CD4-positive, alpha-beta memory T cell (primary cell): ENCODE measurements at regions of chr9 and their contacts with region 1.

Region 1: DNA sequence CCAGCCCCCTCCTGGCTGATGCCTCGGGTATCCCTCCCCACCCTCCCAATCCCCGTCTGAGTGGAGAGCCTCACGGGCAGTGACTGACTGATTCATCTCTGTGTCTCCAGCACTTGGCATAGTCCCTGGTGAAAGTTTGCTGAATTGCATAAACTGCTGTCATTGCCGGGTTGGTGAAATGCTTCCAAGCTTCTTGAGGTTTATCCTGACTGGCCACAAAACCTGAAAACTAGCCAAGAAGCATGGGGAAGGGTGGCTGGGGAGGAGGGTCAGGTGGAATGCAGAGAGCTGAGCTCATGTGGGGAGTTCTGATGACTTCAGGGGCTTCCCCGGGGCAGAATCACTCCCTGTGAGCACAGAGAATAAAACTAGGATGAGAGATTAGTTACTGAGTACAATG is 56.9 kb upstream of the GGTA1 start:
- DNase-seq: no peak
- H3K4me3 ChIP-seq: no peak overlapping the region
- H3K4me3 Mint-ChIP-seq: no peak overlapping the region
- H3K27ac ChIP-seq: no peak overlapping the region
- H3K27ac Mint-ChIP-seq: no peak overlapping the region
- H3K4me1 ChIP-seq: no peaks in the 10 kb centered on the region
- H3K4me1 Mint-ChIP-seq: no peaks in the 10 kb centered on the region
- H3K27me3 ChIP-seq: peaks cover 5% of the 10 kb centered on the region
- H3K27me3 Mint-ChIP-seq: peaks cover 4 to 9% of the 10 kb centered on the region in 2 donors

Region 2: GRCh38 chr9:121545875-121546423 is 10.6 kb before region 1 on chr9:
- CTCF ChIA-PET with region 1: interaction called, 13 read pairs
- POLR2A ChIA-PET with region 1: no interaction called
- intact Hi-C with region 1: no loop called
- DNase-seq: peak; percentile 25 to 54 (median 41)
- H3K4me3 ChIP-seq: no peak overlapping the region
- H3K4me3 Mint-ChIP-seq: no peak overlapping the region
- H3K27ac ChIP-seq: no peak overlapping the region
- H3K27ac Mint-ChIP-seq: no peak overlapping the region
- H3K4me1 ChIP-seq: peaks cover 10% of the 10 kb centered on the region
- H3K4me1 Mint-ChIP-seq: peaks cover 0 to 5% (median 3%) of the 10 kb centered on the region in 4 donors
- H3K27me3 ChIP-seq: no peaks in the 10 kb centered on the region
- H3K27me3 Mint-ChIP-seq: peaks cover 6 to 9% of the 10 kb centered on the region in 2 donors

Region 3: DNA sequence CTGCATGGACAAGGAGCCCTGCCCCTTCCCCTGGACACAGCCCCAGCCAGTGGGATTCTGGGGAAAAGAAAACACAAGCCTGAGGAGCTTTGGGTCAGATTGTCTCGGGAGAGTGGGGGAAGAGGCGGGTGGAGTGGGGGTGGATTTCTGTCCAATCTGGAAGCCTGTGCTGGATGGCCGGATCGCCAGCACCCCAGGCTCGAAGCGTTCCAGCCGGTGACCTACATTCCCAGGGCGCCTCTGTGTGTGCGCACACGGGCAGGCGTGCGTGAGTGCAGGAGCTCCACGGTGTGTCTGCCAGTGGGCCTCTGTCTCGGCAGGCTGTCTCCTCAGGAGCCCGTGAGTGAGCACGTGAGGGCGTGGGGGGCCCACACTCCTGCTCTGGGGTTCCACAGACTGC is 20.6 kb after region 1 on chr9:
- CTCF ChIA-PET with region 1: no interaction called
- POLR2A ChIA-PET with region 1: no interaction called
- intact Hi-C with region 1: no loop called
- DNase-seq: no peak
- H3K4me3 ChIP-seq: no peak overlapping the region
- H3K4me3 Mint-ChIP-seq: no peak overlapping the region
- H3K27ac ChIP-seq: no peak overlapping the region
- H3K27ac Mint-ChIP-seq: no peak overlapping the region
- H3K4me1 ChIP-seq: no peaks in the 10 kb centered on the region
- H3K4me1 Mint-ChIP-seq: no peaks in the 10 kb centered on the region
- H3K27me3 ChIP-seq: peaks cover 5% of the 10 kb centered on the region
- H3K27me3 Mint-ChIP-seq: peaks cover 0 to 9% of the 10 kb centered on the region in 2 donors